Mammary epithelial cell (primary cell): ENCODE measurements at regions of chr10 and their contacts with region 1.

Region 1: GRCh38 chr10:51001587-51001986 is 72.7 kb upstream of the PRKG1 start:
- DNase-seq: no peak
- H3K4me3 ChIP-seq: no peak overlapping the region
- H3K27ac ChIP-seq: no peak overlapping the region
- H3K4me1 ChIP-seq: no peaks in the 10 kb centered on the region
- H3K27me3 ChIP-seq: no peaks in the 10 kb centered on the region
- CTCF ChIP-seq: peak; percentile 21 to 53

Region 2: GRCh38 chr10:50788951-50789945 is 212.3 kb before region 1 on chr10:
- CTCF ChIA-PET with region 1: no interaction called
- dilution Hi-C with region 1: no loop called
- in situ Hi-C with region 1: no loop called
- intact Hi-C with region 1: loop called (anchors 5 kb)
- DNase-seq: peak; percentile 21
- H3K4me3 ChIP-seq: no peak overlapping the region
- H3K27ac ChIP-seq: no peak overlapping the region
- H3K4me1 ChIP-seq: no peaks in the 10 kb centered on the region
- H3K27me3 ChIP-seq: no peaks in the 10 kb centered on the region
- CTCF ChIP-seq: peak; percentile 57 to 68

Region 3: DNA sequence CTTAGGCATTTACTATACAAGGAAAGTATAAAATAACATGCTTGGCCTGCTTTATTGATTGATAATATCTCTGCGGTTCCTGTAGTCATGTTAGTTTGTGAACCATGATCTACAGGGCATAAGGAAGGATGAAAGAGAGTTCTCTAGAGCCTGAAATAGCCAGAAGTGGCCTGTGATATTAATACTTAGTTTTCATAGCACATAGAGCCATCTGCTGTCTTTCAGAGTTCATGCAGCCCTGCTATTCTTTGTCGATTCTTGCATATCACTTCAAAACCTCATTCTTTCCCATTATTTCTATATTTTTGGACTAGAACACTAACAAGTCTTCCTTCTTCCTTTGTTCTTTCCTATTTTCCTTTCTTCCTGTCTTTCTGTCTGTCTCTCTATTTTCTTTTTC is 46.3 kb after region 1 on chr10:
- CTCF ChIA-PET with region 1: no interaction called
- dilution Hi-C with region 1: no loop called
- in situ Hi-C with region 1: no loop called
- intact Hi-C with region 1: loop called (anchors 2 kb)
- DNase-seq: no peak
- H3K4me3 ChIP-seq: no peak overlapping the region
- H3K27ac ChIP-seq: no peak overlapping the region
- H3K4me1 ChIP-seq: no peaks in the 10 kb centered on the region
- H3K27me3 ChIP-seq: no peaks in the 10 kb centered on the region
- CTCF ChIP-seq: peak in 1 of 2 donors; percentile 28

Region 4: GRCh38 chr10:51389415-51390321 is 388.1 kb after region 1 on chr10:
- CTCF ChIA-PET with region 1: no interaction called
- dilution Hi-C with region 1: no loop called
- in situ Hi-C with region 1: no loop called
- intact Hi-C with region 1: loop called (anchors 10 kb)
- DNase-seq: peak; percentile 15
- H3K4me3 ChIP-seq: no peak overlapping the region
- H3K27ac ChIP-seq: no peak overlapping the region
- H3K4me1 ChIP-seq: no peaks in the 10 kb centered on the region
- H3K27me3 ChIP-seq: no peaks in the 10 kb centered on the region
- CTCF ChIP-seq: peak; percentile 88 to 91

Region 5: DNA sequence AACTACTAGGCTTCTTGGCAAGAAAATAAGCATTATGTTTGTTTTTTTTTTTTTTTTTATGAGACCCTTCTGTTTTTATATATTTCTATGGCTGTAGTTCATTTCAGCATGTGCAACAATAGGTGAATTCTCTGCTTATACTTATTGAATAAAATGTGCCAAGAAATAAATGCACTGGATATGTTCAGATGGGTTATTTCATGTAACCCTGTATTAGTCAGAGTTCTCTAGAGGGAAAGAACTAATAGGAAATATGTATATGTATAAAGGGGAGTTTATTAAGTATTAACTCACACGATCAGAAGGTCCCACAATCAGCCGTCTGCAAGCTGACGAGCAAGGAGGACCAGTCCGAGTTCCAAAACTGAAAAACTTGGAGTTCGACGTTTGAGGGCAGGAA is 405.0 kb after region 1 on chr10:
- CTCF ChIA-PET with region 1: no interaction called
- dilution Hi-C with region 1: no loop called
- in situ Hi-C with region 1: no loop called
- intact Hi-C with region 1: no loop called
- DNase-seq: no peak
- H3K4me3 ChIP-seq: no peak overlapping the region
- H3K27ac ChIP-seq: no peak overlapping the region
- H3K4me1 ChIP-seq: no peaks in the 10 kb centered on the region
- H3K27me3 ChIP-seq: no peaks in the 10 kb centered on the region
- CTCF ChIP-seq: no peak

Region 6: GRCh38 chr10:51422311-51423120 is 420.9 kb after region 1 on chr10:
- CTCF ChIA-PET with region 1: no interaction called
- dilution Hi-C with region 1: no loop called
- in situ Hi-C with region 1: no loop called
- intact Hi-C with region 1: loop called (anchors 5 kb)
- DNase-seq: peak; percentile 14
- H3K4me3 ChIP-seq: no peak overlapping the region
- H3K27ac ChIP-seq: no peak overlapping the region
- H3K4me1 ChIP-seq: no peaks in the 10 kb centered on the region
- H3K27me3 ChIP-seq: no peaks in the 10 kb centered on the region
- CTCF ChIP-seq: peak; percentile 80 to 81

Region 7: DNA sequence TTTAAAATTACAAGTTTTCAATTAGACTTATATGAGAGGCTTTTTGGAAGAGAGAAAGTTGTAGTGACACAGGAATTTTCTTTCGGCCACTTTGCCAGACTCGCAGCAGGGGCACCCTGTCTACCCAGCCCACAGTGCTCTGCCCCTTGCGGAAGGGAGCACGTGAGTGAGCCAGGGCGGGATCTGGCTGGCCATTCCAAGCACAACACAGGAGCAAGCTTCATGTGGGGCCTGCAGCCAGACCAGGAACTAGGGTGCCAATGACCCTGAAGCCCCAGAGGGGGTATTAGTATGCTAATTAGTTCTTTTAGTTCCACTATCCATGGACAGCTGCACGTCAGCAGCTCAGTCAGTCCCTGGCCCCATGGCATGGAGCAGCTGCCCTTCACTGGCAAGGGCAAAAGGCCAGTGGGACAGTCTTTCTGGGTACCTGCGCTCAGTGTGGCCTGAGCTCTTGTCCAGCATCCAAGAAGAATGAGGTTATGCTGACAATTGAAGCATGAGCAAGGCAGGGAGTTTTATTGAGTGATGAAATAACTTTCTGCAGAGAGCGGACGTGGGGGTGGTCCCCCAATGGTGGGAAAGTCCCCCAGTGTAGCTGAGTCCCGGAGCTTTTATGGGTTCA is 948.9 kb after region 1 on chr10:
- CTCF ChIA-PET with region 1: no interaction called
- dilution Hi-C with region 1: no loop called
- in situ Hi-C with region 1: no loop called
- intact Hi-C with region 1: loop called (anchors 10 kb)
- DNase-seq: no peak
- H3K4me3 ChIP-seq: no peak overlapping the region
- H3K27ac ChIP-seq: no peak overlapping the region
- H3K4me1 ChIP-seq: no peaks in the 10 kb centered on the region
- H3K27me3 ChIP-seq: no peaks in the 10 kb centered on the region
- CTCF ChIP-seq: no peak

Region 8: GRCh38 chr10:52004342-52004949 is 1002.9 kb after region 1 on chr10:
- CTCF ChIA-PET with region 1: no interaction called
- dilution Hi-C with region 1: no loop called
- in situ Hi-C with region 1: no loop called
- intact Hi-C with region 1: loop called (anchors 5 kb)
- DNase-seq: peak; percentile 16
- H3K4me3 ChIP-seq: no peak overlapping the region
- H3K27ac ChIP-seq: no peak overlapping the region
- H3K4me1 ChIP-seq: no peaks in the 10 kb centered on the region
- H3K27me3 ChIP-seq: no peaks in the 10 kb centered on the region
- CTCF ChIP-seq: peak; percentile 61 to 70